ENCODE measurements at regions of chr17 and their contacts with region 1.

Region 1: DNA sequence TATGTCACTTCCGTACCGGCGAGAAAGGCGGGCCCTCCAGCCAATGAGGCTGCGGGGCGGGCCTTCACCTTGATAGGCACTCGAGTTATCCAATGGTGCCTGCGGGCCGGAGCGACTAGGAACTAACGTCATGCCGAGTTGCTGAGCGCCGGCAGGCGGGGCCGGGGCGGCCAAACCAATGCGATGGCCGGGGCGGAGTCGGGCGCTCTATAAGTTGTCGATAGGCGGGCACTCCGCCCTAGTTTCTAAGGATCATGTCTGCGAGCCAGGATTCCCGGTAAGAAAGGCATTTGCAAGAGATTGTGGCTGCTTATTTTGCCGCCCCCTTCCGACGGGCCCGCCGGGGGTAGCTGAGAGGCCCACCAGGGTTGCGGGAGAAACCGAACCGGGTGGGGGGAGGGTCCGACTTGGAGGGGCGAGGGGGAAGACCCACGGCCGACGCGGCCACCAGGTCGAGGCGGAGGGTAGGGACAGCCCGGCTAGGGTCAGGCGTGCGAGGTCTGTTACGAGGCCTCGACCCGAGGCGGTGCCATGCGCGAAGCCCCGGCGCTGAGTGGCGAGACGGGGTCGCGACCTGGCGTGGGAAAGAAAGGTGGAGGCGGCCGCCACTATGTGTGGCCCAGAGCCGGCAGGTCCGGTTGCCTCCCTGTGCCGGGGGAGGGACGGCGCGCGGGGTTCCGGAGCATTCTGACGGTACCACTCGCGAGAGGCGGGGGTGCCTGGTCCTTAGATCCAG is 6.7 kb upstream of the CD68 start:
- DNase-seq: peak; percentile 100
- ATAC-seq: peak; percentile 92
- H3K4me3 Mint-ChIP-seq: peak overlapping the region; percentile 94
- H3K27ac Mint-ChIP-seq: peak overlapping the region; percentile 99
- H3K4me1 Mint-ChIP-seq: peaks cover 51% of the 10 kb centered on the region
- H3K27me3 Mint-ChIP-seq: no peaks in the 10 kb centered on the region

Region 2: GRCh38 chr17:7045909-7046724 is 526.6 kb before region 1 on chr17:
- CTCF ChIA-PET with region 1: no interaction called
- POLR2A ChIA-PET with region 1: no interaction called
- intact Hi-C with region 1: loop called in 1 of 2 experiments (anchors 10 kb)
- DNase-seq: peak; percentile 66
- ATAC-seq: peak; percentile 34
- H3K4me3 Mint-ChIP-seq: peak overlapping the region; percentile 68
- H3K27ac Mint-ChIP-seq: peak overlapping the region; percentile 59
- H3K4me1 Mint-ChIP-seq: peaks cover 37% of the 10 kb centered on the region
- H3K27me3 Mint-ChIP-seq: peaks cover 3% of the 10 kb centered on the region

Region 3: GRCh38 chr17:7306911-7307686 is 265.7 kb before region 1 on chr17 and contains the start of gene EIF5A:
- CTCF ChIA-PET with region 1: no interaction called
- POLR2A ChIA-PET with region 1: interaction called, 3 read pairs
- intact Hi-C with region 1: loop called (anchors 1 kb)
- DNase-seq: peak; percentile 100
- ATAC-seq: peak; percentile 86
- H3K4me3 Mint-ChIP-seq: peak within 1 kb of the TSS; percentile 96
- H3K27ac Mint-ChIP-seq: peak within 1 kb of the TSS; percentile 100
- H3K4me1 Mint-ChIP-seq: peaks cover 36% of the 10 kb centered on the region
- H3K27me3 Mint-ChIP-seq: no peaks in the 10 kb centered on the region
- total RNA-seq, gene EIF5A: 780 to 934 TPM

Region 4: DNA sequence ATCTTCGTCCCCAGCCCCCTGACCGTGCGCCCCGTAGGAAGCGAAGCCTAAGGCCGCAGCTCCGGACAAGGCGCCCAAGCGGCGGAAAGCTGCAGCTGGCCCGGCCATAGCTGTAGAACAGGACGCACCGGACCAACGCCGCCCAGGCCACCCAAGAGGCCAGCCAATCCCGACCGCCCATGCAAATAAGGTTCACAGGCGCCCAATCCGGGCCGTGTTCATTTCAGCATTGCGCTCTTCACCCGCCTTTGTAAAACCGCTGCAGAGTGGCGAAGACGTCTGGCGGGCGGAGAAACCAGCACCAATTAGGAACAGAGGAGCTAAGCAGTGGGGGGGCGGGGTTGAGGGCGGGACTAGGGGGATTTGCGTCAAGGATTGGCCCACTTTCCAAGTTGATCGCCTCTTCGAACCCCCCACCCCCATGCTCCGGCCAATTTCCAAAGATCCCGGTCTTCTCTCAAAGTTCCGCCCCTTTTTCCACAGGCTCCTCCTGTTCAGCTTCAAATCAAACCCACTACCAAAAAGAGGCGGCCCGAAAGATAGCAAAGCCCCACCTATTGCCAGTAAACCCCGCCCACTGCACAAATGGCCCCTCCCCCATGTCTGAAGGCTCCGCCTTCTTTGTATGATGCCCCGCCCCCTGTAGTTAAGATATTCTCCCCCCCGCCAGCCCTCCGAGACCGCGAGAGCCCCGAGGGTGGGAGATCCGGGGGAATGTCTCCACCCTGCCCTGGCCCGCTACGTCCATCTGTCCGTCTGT is 168.6 kb before region 1 on chr17 and contains the start of gene TMEM256:
- CTCF ChIA-PET with region 1: no interaction called
- POLR2A ChIA-PET with region 1: interaction called, 3 read pairs
- intact Hi-C with region 1: loop called (anchors 1 to 2 kb)
- DNase-seq: peak; percentile 99
- ATAC-seq: peak; percentile 94
- H3K4me3 Mint-ChIP-seq: peak within 1 kb of the TSS; percentile 89
- H3K27ac Mint-ChIP-seq: peak within 1 kb of the TSS; percentile 92
- H3K4me1 Mint-ChIP-seq: peaks cover 16% of the 10 kb centered on the region
- H3K27me3 Mint-ChIP-seq: peaks cover 2% of the 10 kb centered on the region
- total RNA-seq, gene TMEM256: 55.8 to 58.1 TPM

Region 5: DNA sequence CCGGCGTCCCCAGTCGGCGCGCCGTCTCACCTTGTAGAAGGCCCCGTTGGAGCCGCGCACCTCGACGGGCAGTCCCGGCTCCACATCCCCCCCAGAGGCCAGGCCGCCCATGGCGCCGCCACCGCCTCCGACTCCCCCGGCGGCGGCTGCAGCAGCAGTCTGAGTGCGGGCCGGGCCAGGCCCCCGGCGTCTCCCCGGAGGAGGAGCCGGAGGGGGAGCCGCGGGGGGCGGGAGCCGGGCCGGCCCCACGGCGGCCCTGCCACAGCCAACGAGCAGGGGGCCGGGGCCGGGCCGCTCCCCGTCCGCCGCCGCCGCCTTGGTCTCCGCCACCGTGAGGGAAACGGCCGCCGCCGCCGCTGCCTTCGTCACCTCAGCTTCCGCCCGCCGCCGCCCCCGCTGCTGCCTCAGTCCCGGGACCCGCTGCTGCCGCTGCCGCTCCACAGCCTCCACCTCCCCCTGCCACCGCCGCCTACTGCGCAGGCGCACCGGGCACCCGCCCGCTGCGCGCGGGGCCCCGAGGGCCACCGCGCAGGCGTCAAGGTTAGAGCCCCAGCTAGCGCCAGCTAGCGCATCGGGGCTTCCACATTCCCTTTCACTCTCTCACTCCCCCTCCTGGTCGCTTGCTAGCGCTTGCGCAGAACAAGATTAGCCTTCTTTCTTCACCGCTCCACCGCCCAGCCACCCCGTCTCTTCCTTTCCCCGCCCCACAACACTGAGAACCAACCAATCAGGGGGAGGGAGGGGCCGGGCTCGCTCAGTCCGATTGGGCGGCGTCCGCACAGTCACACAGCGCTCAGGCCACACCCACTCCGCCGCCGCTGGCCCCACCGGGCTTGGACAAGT is 41.9 kb after region 1 on chr17 and contains the start of gene FXR2:
- CTCF ChIA-PET with region 1: no interaction called
- POLR2A ChIA-PET with region 1: interaction called, 6 read pairs
- intact Hi-C with region 1: loop called (anchors 1 to 2 kb)
- DNase-seq: peak; percentile 100
- ATAC-seq: peak; percentile 95
- H3K4me3 Mint-ChIP-seq: peak within 1 kb of the TSS; percentile 85
- H3K27ac Mint-ChIP-seq: peak within 1 kb of the TSS; percentile 93
- H3K4me1 Mint-ChIP-seq: peaks cover 32% of the 10 kb centered on the region
- H3K27me3 Mint-ChIP-seq: no peaks in the 10 kb centered on the region
- total RNA-seq, gene FXR2: 35.6 to 50.2 TPM

Region 6: GRCh38 chr17:8151123-8151640 is 578.4 kb after region 1 on chr17:
- CTCF ChIA-PET with region 1: no interaction called
- POLR2A ChIA-PET with region 1: no interaction called
- intact Hi-C with region 1: loop called (anchors 5 to 10 kb)
- DNase-seq: peak; percentile 93
- ATAC-seq: peak; percentile 35
- H3K4me3 Mint-ChIP-seq: no peak overlapping the region
- H3K27ac Mint-ChIP-seq: peak overlapping the region; percentile 80
- H3K4me1 Mint-ChIP-seq: peaks cover 30% of the 10 kb centered on the region
- H3K27me3 Mint-ChIP-seq: no peaks in the 10 kb centered on the region

Measured in activated CD4-positive, alpha-beta T cell treated with anti-CD3 and anti-CD28 coated beads for 36 hours (primary cell).